Right ventricle myocardium inferior (tissue), 1 donor: ENCODE measurements at regions of chr10 and their contacts with region 1.

Region 1: DNA sequence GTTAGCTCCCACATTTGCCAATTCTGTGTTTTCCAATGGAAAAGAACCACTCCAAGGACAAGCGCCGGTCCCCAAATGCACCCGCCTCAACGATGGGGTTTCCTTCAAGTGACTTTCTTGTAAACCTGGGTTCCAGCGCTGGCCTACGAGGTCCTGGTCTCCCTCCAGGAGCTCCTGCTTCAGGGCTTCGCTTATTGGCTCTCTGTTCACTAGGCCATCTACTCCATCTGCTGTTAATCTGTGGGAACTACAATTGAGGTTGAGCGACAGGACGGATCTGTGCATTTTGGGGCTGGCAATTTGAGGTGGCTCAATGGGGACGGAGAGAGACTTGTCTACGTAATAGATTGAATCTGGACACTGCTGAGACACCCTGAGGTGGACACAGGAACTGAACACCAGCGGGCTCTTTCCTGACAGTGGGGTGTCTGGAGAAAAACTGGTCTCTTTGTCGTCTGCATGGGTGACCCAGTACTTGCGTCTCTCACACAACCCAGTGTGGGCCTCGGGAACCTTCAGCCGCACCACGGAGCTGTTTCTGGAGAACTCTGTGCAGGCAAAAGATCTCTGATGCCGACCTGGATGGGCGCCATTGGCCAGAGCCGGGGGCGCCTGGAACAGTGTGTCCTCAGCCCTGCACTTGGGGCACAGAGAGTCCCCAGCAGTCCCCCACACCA is 115.9 kb upstream of the ADAM12 start:
- DNase-seq: no peak
- ATAC-seq: peak; percentile 44

Region 2: GRCh38 chr10:125415006-125415633 is 1089.1 kb before region 1 on chr10:
- intact Hi-C with region 1: no loop called
- DNase-seq: no peak
- ATAC-seq: no peak

Region 3: GRCh38 chr10:125868372-125868975 is 635.7 kb before region 1 on chr10:
- intact Hi-C with region 1: loop called (anchors 10 kb)
- DNase-seq: no peak
- ATAC-seq: no peak

Region 4: DNA sequence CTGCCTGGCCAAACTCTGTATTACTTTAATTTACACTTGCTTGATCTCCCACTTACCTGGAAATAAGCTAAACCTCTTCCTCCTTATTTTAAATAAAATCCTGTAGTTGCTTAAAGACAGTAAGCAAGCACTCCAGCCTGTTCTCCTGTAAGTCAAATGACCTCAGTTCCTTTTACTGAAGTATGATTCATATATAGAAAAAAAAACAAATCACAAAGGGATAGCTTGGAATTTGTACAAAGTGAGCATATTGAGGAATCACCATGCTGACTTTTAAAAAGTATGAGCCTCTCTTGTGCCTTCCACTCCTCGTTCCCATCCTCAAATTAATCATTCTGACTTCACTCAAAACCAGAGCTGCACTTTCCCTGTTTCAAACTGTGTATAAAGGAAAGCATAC is 114.3 kb after region 1 on chr10:
- intact Hi-C with region 1: no loop called
- DNase-seq: no peak
- ATAC-seq: no peak